ENCODE measurements at regions of chr9 and their contacts with region 1.

Region 1: DNA sequence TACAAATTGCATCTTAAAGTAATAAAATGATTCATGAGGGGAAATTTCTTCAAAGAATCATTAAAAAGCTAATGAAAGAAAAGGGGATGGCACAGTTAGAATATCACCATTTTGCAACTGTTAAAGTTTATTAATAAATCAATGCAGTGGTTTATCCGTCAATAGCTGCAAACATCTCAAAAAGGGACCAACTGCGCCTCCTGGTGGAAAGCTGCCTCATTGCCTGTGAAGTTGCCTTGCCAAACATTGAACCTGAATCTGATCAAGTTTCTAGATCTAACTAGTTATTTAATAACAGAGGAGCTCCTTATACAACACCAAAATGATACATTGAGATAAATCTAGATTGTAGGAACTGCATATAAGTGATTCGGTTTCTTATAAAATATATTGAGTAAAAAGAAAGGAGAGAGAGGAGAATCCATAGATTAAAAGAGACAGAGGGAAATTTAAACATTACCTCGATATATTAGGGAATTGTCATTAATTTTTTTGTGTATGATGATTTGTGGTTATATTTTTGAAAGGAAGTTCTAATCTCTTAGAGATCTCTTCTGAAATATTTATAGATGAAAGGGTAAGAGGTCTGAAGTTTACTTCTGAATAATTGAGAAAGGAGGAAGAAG is 6.9 kb upstream of the NDUFB6 start:
- DNase-seq: peak; percentile 60 to 87 (median 80)
- ATAC-seq: peak; percentile 78
- H3K4me3 ChIP-seq: no peak overlapping the region
- H3K4me3 Mint-ChIP-seq: no peak overlapping the region
- H3K27ac ChIP-seq: no peak overlapping the region
- H3K27ac Mint-ChIP-seq: no peak overlapping the region
- H3K4me1 ChIP-seq: no peaks in the 10 kb centered on the region
- H3K4me1 Mint-ChIP-seq: no peaks in the 10 kb centered on the region
- H3K27me3 ChIP-seq: no peaks in the 10 kb centered on the region
- H3K27me3 Mint-ChIP-seq: peaks cover 12% of the 10 kb centered on the region
- CTCF ChIP-seq: peak; percentile 98

Region 2: DNA sequence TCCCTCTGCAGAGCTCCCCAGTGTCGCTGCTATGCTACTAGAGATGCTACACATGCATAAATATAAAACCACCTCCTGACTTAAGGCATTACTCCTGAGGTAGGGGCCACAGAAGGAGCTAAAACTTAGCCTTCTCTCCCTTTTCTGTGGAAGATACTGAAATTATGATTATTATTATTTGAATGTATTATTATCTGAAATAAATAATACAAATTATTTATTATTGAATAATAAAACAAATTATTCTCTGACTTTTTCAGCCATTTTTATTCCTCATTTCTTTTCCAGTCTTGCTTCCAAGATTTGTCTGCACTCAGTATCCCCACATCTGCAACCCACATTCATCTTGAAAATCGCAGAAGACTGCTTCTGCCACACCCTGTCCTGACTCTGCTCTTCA is 610.3 kb before region 1 on chr9:
- CTCF ChIA-PET with region 1: no interaction called
- POLR2A ChIA-PET with region 1: no interaction called
- intact Hi-C with region 1: no loop called
- DNase-seq: no peak
- ATAC-seq: no peak
- H3K4me3 ChIP-seq: no peak overlapping the region
- H3K4me3 Mint-ChIP-seq: no peak overlapping the region
- H3K27ac ChIP-seq: no peak overlapping the region
- H3K27ac Mint-ChIP-seq: no peak overlapping the region
- H3K4me1 ChIP-seq: no peaks in the 10 kb centered on the region
- H3K4me1 Mint-ChIP-seq: no peaks in the 10 kb centered on the region
- H3K27me3 ChIP-seq: no peaks in the 10 kb centered on the region
- H3K27me3 Mint-ChIP-seq: no peaks in the 10 kb centered on the region
- CTCF ChIP-seq: no peak

Region 3: DNA sequence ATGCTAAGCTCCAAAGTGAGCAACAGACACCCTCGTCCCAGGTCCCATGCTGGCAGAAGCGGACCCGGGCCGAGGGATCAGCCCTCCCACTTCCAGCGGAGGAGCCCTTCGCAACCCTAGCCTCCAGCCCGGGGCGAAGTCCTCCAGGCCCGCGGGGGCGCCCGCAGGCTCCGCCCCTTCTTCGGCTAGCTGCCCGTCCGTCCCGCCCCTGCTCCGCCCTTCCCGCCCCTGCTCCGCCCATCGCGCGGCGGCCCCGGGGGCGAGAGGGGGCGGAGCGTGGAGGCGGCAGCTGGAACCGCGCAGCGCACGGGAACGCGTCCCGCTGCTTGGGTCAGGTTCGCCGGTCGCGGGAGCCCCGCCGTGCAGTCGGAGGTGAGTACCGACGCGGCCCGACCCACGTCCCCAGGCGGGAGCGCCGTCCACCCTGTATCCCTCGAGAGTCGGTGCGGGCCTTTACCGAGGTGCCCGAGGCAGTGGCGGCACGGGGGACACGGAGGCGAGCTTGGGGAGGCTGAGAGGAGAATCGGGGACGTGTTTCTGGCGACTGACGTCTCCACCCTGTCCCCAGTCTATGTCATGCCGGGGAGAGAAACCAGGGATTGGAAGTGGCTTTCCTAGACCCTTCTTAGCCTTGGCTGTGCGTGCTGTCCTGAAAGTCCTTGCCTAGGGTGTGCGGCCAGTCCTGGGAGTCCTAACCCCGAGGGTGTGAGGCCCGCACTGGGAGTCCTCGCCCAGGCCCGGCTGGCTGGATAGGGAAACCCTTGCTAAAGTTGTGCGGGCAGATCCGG is 195.3 kb before region 1 on chr9 and contains the start of gene ACO1:
- CTCF ChIA-PET with region 1: interaction called, 392 read pairs
- POLR2A ChIA-PET with region 1: interaction called, 24 read pairs
- intact Hi-C with region 1: loop called (anchors 1 kb)
- DNase-seq: peak; percentile 74 to 93 (median 87)
- ATAC-seq: peak; percentile 98
- H3K4me3 ChIP-seq: peak within 1 kb of the TSS; percentile 81 to 90
- H3K4me3 Mint-ChIP-seq: peak within 1 kb of the TSS; percentile 84
- H3K27ac ChIP-seq: peak within 1 kb of the TSS; percentile 21 to 45
- H3K27ac Mint-ChIP-seq: peak within 1 kb of the TSS; percentile 55
- H3K4me1 ChIP-seq: peaks cover 17% of the 10 kb centered on the region
- H3K4me1 Mint-ChIP-seq: peaks cover 22% of the 10 kb centered on the region
- H3K27me3 ChIP-seq: no peaks in the 10 kb centered on the region
- H3K27me3 Mint-ChIP-seq: peaks cover 5% of the 10 kb centered on the region
- CTCF ChIP-seq: no peak
- total RNA-seq, gene ACO1: 3.1 to 3.6 TPM

Region 4: GRCh38 chr9:32526041-32526706 is 53.6 kb before region 1 on chr9 and contains the start of gene RIGI:
- CTCF ChIA-PET with region 1: interaction called, 20 read pairs
- POLR2A ChIA-PET with region 1: no interaction called
- intact Hi-C with region 1: no loop called
- DNase-seq: peak; percentile 47 to 94 (median 80)
- ATAC-seq: peak; percentile 79
- H3K4me3 ChIP-seq: peak within 1 kb of the TSS; percentile 79 to 85
- H3K4me3 Mint-ChIP-seq: peak within 1 kb of the TSS; percentile 98
- H3K27ac ChIP-seq: peak within 1 kb of the TSS; percentile 85 to 86
- H3K27ac Mint-ChIP-seq: peak within 1 kb of the TSS; percentile 98
- H3K4me1 ChIP-seq: peaks cover 22% of the 10 kb centered on the region
- H3K4me1 Mint-ChIP-seq: peaks cover 55% of the 10 kb centered on the region
- H3K27me3 ChIP-seq: no peaks in the 10 kb centered on the region
- H3K27me3 Mint-ChIP-seq: no peaks in the 10 kb centered on the region
- CTCF ChIP-seq: peak; percentile 60
- total RNA-seq, gene RIGI: 3.4 to 3.9 TPM

Region 5: GRCh38 chr9:32566770-32567169 is 13.0 kb before region 1 on chr9:
- CTCF ChIA-PET with region 1: interaction called, 13 read pairs
- POLR2A ChIA-PET with region 1: interaction called, 3 read pairs
- intact Hi-C with region 1: no loop called
- DNase-seq: no peak
- ATAC-seq: no peak
- H3K4me3 ChIP-seq: no peak overlapping the region
- H3K4me3 Mint-ChIP-seq: no peak overlapping the region
- H3K27ac ChIP-seq: no peak overlapping the region
- H3K27ac Mint-ChIP-seq: no peak overlapping the region
- H3K4me1 ChIP-seq: peaks cover 2% of the 10 kb centered on the region
- H3K4me1 Mint-ChIP-seq: peaks cover 34% of the 10 kb centered on the region
- H3K27me3 ChIP-seq: no peaks in the 10 kb centered on the region
- H3K27me3 Mint-ChIP-seq: no peaks in the 10 kb centered on the region
- CTCF ChIP-seq: no peak

Region 6: DNA sequence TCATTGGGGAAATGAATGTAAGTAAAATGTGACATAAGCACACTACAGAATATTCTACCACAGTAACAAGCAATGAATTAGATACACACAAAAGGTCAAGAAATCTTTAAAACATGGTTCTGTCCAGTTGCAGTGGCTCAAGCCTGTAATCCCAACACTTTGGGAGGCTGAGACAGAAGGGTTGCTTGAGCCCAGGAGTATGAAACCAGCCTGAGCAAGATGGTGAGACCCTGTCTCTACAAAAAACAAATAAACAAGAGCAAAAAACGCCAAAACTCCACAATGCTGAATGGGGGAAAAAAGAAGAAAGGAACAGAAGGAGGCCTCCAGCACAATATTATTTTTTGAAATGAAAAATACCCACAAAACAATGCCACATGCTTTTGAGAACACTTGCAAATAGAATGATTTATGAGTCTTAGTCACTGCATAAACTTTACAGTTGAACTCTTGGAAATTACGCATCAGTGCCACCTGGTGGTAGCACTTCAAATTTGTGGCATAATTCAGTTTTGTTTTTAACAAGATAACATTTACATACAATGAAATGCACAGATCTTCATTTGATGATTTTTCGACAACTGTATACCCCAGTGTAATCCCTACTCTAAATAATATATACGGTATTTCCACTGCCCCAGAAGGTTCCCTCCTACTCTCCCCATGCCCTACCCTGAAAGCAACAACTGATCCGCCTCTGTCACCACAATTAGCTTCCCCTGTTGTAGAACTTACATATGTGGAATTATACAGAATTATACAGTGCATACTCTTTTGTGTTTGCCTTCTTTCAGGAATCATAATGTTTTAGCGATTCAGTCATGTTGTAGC is 645.7 kb after region 1 on chr9:
- CTCF ChIA-PET with region 1: no interaction called
- POLR2A ChIA-PET with region 1: no interaction called
- intact Hi-C with region 1: loop called in 1 of 2 experiments (anchors 5 kb)
- DNase-seq: peak; percentile 44 to 82 (median 74)
- ATAC-seq: peak; percentile 86
- H3K4me3 ChIP-seq: no peak overlapping the region
- H3K4me3 Mint-ChIP-seq: no peak overlapping the region
- H3K27ac ChIP-seq: no peak overlapping the region
- H3K27ac Mint-ChIP-seq: no peak overlapping the region
- H3K4me1 ChIP-seq: no peaks in the 10 kb centered on the region
- H3K4me1 Mint-ChIP-seq: peaks cover 13% of the 10 kb centered on the region
- H3K27me3 ChIP-seq: no peaks in the 10 kb centered on the region
- H3K27me3 Mint-ChIP-seq: peaks cover 2% of the 10 kb centered on the region
- CTCF ChIP-seq: peak; percentile 78